Right ventricle myocardium superior (tissue), 1 donor: ENCODE measurements at regions of chr5 and their contacts with region 1.

Region 1: DNA sequence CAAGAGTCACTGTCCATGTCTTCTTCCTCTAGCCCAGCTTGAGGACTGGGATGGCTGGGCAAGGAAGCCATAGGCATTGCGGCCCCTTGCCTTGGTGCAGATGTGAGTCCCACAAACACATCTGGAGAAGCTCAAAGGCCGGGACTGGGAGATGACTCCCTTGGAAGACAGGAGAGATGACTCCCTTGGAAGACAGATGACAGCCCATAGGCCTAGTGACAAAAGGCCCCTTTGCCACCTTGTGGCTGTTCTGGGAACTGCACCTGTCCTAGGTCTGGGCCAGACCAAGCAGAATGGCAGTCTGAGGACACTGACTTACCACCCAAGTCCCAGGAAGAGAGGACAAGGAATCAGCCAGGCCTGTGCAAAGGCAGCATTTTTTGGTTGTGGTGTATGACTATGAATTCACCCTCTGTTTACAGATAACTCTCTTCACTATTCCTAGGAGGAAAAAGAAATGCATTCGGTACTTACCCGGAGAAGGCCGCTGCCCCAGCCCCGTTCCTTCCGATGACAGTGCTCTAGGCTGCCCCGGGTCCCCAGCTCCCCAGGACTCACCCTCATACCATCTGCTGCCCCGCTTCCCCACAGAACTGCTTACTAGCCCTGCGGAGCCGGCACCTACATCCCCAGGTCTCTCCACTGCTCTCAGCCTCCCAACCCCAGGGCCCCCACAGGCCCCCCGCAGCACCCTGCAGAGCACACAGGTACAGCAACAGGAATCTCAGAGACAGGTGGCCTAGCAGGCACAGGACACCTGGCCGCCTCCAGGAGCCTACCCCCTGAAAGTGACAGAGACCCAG is 30.8 kb downstream of the SKP1 start:
- DNase-seq: peak; percentile 85
- ATAC-seq: peak; percentile 86

Region 2: GRCh38 chr5:134041570-134042411 is 104.2 kb before region 1 on chr5:
- intact Hi-C with region 1: loop called (anchors 5 kb)
- DNase-seq: no peak
- ATAC-seq: no peak

Region 3: DNA sequence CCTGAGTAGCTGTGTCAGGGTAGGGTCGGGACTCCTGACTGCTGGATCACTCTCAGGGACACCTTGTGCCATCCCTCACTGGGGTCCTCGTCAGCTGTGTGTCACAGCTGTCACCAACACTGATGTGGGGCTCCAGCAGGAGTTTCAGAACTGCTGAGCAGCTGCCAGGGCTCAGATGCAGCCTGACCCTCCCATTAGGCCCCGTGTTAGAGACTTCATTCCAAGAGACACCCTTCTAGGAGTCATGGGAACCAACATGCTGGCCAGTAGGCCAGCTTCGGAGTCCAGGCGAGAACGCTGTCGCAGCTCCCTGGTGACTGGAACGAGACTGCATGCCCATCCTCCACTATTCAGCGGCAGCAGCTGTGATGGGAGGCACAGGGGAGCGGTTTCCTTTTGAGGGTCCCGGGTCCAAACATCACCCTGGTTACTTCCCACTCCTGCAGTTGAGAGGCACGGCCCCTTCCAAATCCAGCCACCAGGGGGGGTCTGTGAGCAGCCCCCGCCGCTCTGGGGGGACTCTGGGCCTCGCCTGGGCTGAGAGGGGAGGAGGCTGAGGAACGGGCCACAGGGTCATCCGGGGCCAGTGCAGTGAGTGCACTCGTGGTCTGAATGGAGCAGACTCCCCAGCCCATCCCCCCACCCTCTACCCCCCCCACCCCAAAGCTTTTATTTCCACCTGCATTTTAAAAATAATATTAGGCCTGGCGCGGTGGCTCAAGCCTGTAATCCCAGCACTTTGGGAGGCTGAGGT is 44.1 kb before region 1 on chr5:
- intact Hi-C with region 1: loop called (anchors 5 kb)
- DNase-seq: peak; percentile 74
- ATAC-seq: peak; percentile 83